ENCODE measurements at regions of chr2 and their contacts with region 1.

Region 1: GRCh38 chr2:157838442-157839161 is 37.5 kb downstream of the ACVR1 start:
- DNase-seq: peak; percentile 76
- H3K4me3 ChIP-seq: peak overlapping the region; percentile 22
- H3K27ac ChIP-seq: peak overlapping the region; percentile 68
- H3K4me1 ChIP-seq: peaks cover 45% of the 10 kb centered on the region
- H3K27me3 ChIP-seq: no peaks in the 10 kb centered on the region
- CTCF ChIP-seq: no peak

Region 2: DNA sequence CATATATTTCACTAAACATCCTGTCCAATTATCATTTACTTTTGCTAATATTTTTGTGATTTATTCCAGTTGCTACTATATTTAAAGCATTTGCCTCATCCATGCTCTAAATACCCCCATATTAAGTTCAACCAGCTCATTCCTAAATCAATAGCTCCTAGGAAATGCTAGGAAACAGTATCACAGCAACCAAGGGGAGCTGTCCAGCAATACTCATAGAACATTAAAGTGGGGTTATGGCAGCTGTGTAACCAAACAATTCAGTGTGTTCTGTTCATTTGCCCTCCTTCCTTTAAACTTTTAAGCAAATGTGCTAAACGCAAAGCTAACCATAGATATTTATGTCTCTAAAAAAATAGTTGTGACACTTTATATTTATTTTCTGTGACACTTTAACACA is 251.0 kb before region 1 on chr2:
- CTCF ChIA-PET with region 1: no interaction called
- POLR2A ChIA-PET with region 1: no interaction called
- intact Hi-C with region 1: no loop called
- DNase-seq: no peak
- H3K4me3 ChIP-seq: no peak overlapping the region
- H3K27ac ChIP-seq: no peak overlapping the region
- H3K4me1 ChIP-seq: no peaks in the 10 kb centered on the region
- H3K27me3 ChIP-seq: peaks cover 11% of the 10 kb centered on the region
- CTCF ChIP-seq: no peak

Region 3: DNA sequence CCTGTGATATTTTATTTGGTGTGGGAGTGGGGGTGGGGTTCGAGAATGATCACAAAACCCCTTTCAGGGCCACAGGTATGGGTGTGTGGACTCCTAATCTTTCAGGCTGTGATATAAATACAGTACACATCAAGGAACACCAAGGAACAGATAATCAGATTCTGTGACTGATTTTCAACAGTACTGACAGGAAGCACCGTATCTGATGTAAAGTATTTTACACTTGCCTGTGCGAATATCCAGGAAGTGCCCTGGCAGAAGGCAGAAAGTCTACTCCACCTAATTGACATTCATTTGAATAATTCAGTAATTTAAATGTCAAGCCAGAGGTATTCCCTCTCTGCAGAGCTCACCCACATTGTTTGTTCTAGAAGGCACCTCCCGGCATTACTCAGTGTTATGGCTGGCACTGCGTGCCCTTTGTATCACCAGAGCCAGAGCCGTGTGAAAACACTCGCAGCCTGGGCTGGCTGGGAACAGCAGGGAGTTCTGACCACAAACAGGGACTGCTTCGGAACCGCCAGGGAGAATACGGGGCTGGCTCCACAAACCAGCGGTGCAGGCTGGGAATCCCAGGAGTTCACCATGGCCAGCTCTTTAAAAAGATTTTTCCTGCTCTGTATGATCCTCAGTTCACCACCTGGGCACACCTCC is 54.3 kb before region 1 on chr2:
- CTCF ChIA-PET with region 1: no interaction called
- POLR2A ChIA-PET with region 1: no interaction called
- intact Hi-C with region 1: loop called (anchors 2 kb)
- DNase-seq: peak; percentile 68
- H3K4me3 ChIP-seq: peak overlapping the region; percentile 1
- H3K27ac ChIP-seq: peak overlapping the region; percentile 5
- H3K4me1 ChIP-seq: peaks cover 42% of the 10 kb centered on the region
- H3K27me3 ChIP-seq: no peaks in the 10 kb centered on the region
- CTCF ChIP-seq: no peak

Region 4: DNA sequence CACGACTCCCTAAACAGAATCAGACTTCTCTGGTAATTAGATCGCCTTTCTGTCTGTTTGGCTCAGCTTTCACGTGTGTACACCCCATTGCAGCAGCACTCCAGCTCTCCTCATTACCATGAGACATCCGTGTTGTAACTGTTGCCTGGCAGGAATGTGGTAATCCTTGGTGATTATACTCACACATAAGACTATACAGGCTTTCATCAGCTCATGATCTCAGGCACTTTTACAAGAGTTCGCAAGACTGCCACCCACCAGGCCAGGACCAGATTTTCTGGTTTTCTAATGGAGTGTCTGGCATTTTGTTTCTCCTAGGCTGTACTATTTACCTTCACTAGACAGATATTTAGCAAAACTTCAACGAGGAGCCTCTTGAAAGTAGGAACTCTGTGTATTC is 12.7 kb before region 1 on chr2:
- CTCF ChIA-PET with region 1: no interaction called
- POLR2A ChIA-PET with region 1: interaction called, 19 read pairs
- intact Hi-C with region 1: no loop called
- DNase-seq: peak; percentile 58
- H3K4me3 ChIP-seq: no peak overlapping the region
- H3K27ac ChIP-seq: peak overlapping the region; percentile 35
- H3K4me1 ChIP-seq: peaks cover 1% of the 10 kb centered on the region
- H3K27me3 ChIP-seq: no peaks in the 10 kb centered on the region
- CTCF ChIP-seq: no peak